Sigmoid colon (tissue), 7 donors: ENCODE measurements at regions of chr17 and their contacts with region 1.

Region 1: DNA sequence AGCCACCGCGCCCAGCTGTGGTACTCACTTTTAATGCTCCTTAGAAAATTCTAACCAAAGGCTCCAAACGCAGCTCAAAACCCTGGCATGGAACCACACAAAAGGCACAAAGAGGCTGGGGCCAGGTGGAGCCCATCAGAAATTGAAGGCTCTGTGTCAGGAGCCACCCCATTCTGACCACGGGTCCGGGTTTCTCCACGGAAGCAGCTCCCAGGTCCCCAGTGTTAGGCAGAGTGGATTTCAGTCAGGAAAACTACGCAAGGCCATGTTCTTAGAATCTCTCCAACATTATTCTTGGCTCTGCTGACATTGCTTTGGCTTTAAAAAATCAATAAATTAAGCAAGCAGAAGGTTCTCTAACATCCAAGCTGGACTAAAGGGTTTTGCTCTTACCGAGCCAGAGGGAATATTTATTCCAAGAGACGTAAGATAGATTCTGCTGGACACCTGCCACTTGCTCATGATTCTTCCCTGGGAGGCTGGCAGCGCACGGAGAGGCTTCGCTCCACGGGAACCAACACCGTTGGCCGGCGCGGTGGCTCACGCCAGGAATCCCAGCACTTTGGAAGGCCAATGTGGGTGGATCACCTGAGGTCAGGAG is 93.5 kb downstream of the NXN start:
- DNase-seq: peak; percentile 97
- H3K4me3 ChIP-seq: no peak overlapping the region
- H3K27ac ChIP-seq: peak overlapping the region; percentile 84 to 90 (median 88)
- H3K4me1 ChIP-seq: peaks cover 0 to 87% (median 81%) of the 10 kb centered on the region in 4 donors
- H3K27me3 ChIP-seq: no peaks in the 10 kb centered on the region
- CTCF ChIP-seq: no peak
- EP300 ChIP-seq: peak; percentile 42 to 80 (median 70)
- POLR2A ChIP-seq: no peak

Region 2: GRCh38 chr17:846901-847843 is 38.9 kb before region 1 on chr17:
- intact Hi-C with region 1: loop called (anchors 5 kb)
- DNase-seq: no peak
- H3K4me3 ChIP-seq: peak overlapping the region; percentile 7 to 46 (median 38)
- H3K27ac ChIP-seq: peak overlapping the region; percentile 77 to 89 (median 84)
- H3K4me1 ChIP-seq: peaks cover 0 to 77% (median 64%) of the 10 kb centered on the region in 4 donors
- H3K27me3 ChIP-seq: no peaks in the 10 kb centered on the region
- CTCF ChIP-seq: no peak
- EP300 ChIP-seq: no peak
- POLR2A ChIP-seq: no peak

Region 3: GRCh38 chr17:901191-901950 is 15.3 kb after region 1 on chr17:
- intact Hi-C with region 1: loop called (anchors 2 kb)
- DNase-seq: peak; percentile 96
- H3K4me3 ChIP-seq: peak overlapping the region in 1 of 4 donors; percentile 2
- H3K27ac ChIP-seq: peak overlapping the region; percentile 79 to 92 (median 88)
- H3K4me1 ChIP-seq: peaks cover 0 to 77% (median 72%) of the 10 kb centered on the region in 4 donors
- H3K27me3 ChIP-seq: no peaks in the 10 kb centered on the region
- CTCF ChIP-seq: no peak
- EP300 ChIP-seq: peak in 2 of 4 donors; percentile 79 to 85
- POLR2A ChIP-seq: no peak

Region 4: DNA sequence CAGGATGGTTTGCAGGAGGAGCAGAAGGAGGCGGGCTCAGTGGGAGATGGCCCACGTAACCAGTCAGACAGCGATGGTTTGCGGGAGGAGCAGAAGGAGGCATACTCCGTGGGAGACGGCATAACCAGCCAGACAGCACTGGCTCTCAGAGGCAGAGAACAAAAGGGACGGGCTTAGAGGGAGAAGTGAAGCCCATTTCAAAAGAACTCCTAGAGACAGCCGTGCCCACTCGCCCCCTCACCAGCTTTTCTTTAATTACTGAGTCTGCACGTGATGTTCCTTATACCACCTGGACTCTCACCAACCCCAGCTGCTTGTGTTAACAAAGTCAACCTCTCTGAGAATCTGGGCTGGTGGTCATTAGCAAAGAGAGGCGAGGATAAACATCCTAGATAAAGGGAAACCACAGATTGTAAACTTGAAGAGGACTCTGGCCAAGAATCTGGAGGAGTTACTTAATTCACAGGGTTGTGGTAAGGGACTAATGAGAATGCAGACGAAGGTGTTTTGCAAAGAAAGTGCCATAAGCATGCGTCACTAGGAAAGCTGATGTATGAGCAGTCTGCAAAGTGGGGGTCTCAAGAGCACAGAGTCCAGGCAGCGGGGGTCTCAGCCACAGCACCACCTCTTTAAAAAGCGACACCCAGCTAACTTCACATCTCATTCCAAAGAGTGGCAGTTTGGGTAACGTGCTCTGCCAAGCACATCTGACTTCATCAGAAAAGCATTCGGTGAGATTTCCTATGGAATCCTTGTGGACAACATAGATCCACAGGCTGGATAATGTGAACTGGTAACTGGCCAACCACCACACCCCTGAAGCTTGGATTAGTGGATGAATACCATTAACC is 41.8 kb after region 1 on chr17:
- intact Hi-C with region 1: no loop called
- DNase-seq: peak; percentile 82
- H3K4me3 ChIP-seq: peak overlapping the region in 1 of 4 donors; percentile 4
- H3K27ac ChIP-seq: peak overlapping the region; percentile 55 to 88 (median 76)
- H3K4me1 ChIP-seq: peaks cover 0 to 53% (median 41%) of the 10 kb centered on the region in 4 donors
- H3K27me3 ChIP-seq: no peaks in the 10 kb centered on the region
- CTCF ChIP-seq: no peak
- EP300 ChIP-seq: no peak
- POLR2A ChIP-seq: peak in 1 of 2 donors; percentile 11

Region 5: GRCh38 chr17:951325-952132 is 65.5 kb after region 1 on chr17:
- intact Hi-C with region 1: loop called (anchors 5 kb)
- DNase-seq: peak; percentile 85
- H3K4me3 ChIP-seq: peak overlapping the region in 3 of 4 donors; percentile 2 to 21 (median 20)
- H3K27ac ChIP-seq: peak overlapping the region; percentile 84 to 93 (median 88)
- H3K4me1 ChIP-seq: peaks cover 0 to 58% (median 42%) of the 10 kb centered on the region in 4 donors
- H3K27me3 ChIP-seq: no peaks in the 10 kb centered on the region
- CTCF ChIP-seq: no peak
- EP300 ChIP-seq: peak in 1 of 4 donors; percentile 28
- POLR2A ChIP-seq: no peak